GM12878 (cell line): ENCODE measurements at regions of chr16 and their contacts with region 1.

Region 1: GRCh38 chr16:24689145-24689544 is 40.3 kb upstream of the TNRC6A start:
- DNase-seq: no peak
- ATAC-seq: peak; percentile 66
- H3K4me3 ChIP-seq: no peak overlapping the region
- H3K27ac ChIP-seq: no peak overlapping the region
- H3K4me1 ChIP-seq: no peaks in the 10 kb centered on the region
- H3K27me3 ChIP-seq: no peaks in the 10 kb centered on the region
- CTCF ChIP-seq: peak; percentile 42 to 64 (median 57); a peak in 5 of 6 replicates
- EP300 ChIP-seq: no peak
- POLR2A ChIP-seq: no peak
- RAD21 ChIP-seq: peak; percentile 64

Region 2: DNA sequence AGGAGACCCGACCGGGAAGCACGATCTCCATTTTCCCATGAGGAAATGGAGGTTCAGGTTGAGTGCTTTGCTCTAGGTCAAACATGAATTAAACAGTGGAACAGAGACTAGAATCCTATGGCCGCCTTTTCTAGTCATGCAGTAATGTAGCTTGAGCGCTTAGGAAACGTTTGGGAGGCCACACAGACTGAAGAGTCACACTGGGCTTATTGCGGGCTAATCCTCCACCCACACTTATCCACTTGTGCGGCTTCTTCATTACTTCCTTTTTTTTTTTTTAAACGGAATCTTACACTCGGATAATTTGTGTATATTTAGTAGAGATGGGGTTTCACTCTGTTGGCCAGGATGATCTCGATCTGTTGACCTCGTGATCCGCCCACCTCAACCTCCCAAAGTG is 407.0 kb before region 1 on chr16:
- CTCF ChIA-PET with region 1: no interaction called
- POLR2A ChIA-PET with region 1: no interaction called
- RAD21 ChIA-PET with region 1: no interaction called
- SMC1A ChIA-PET with region 1: no interaction called
- in situ Hi-C with region 1: no loop called
- intact Hi-C with region 1: no loop called
- DNase-seq: no peak
- ATAC-seq: no peak
- H3K4me3 ChIP-seq: no peak overlapping the region
- H3K27ac ChIP-seq: no peak overlapping the region
- H3K4me1 ChIP-seq: no peaks in the 10 kb centered on the region
- H3K27me3 ChIP-seq: no peaks in the 10 kb centered on the region
- CTCF ChIP-seq: no peak
- EP300 ChIP-seq: no peak
- POLR2A ChIP-seq: no peak
- RAD21 ChIP-seq: no peak

Region 3: GRCh38 chr16:24516900-24517669 is 172.1 kb before region 1 on chr16:
- CTCF ChIA-PET with region 1: interaction called, 5 read pairs
- POLR2A ChIA-PET with region 1: no interaction called
- RAD21 ChIA-PET with region 1: no interaction called
- SMC1A ChIA-PET with region 1: interaction called, 4 read pairs
- in situ Hi-C with region 1: no loop called
- intact Hi-C with region 1: loop called (anchors 2 kb)
- DNase-seq: peak; percentile 38
- ATAC-seq: peak; percentile 90
- H3K4me3 ChIP-seq: no peak overlapping the region
- H3K27ac ChIP-seq: no peak overlapping the region
- H3K4me1 ChIP-seq: no peaks in the 10 kb centered on the region
- H3K27me3 ChIP-seq: no peaks in the 10 kb centered on the region; a peak in 1 of 4 replicates
- CTCF ChIP-seq: peak; percentile 90 to 92 (median 91)
- EP300 ChIP-seq: no peak
- POLR2A ChIP-seq: no peak
- RAD21 ChIP-seq: peak; percentile 91

Region 4: GRCh38 chr16:24580665-24581064 is 108.5 kb before region 1 on chr16:
- CTCF ChIA-PET with region 1: interaction called, 5 read pairs
- POLR2A ChIA-PET with region 1: no interaction called
- RAD21 ChIA-PET with region 1: no interaction called
- SMC1A ChIA-PET with region 1: no interaction called
- in situ Hi-C with region 1: no loop called
- intact Hi-C with region 1: loop called (anchors 10 kb)
- DNase-seq: no peak
- ATAC-seq: no peak
- H3K4me3 ChIP-seq: no peak overlapping the region
- H3K27ac ChIP-seq: no peak overlapping the region
- H3K4me1 ChIP-seq: no peaks in the 10 kb centered on the region
- H3K27me3 ChIP-seq: no peaks in the 10 kb centered on the region
- CTCF ChIP-seq: peak; percentile 6 to 29 (median 10); a peak in 1 of 6 replicates
- EP300 ChIP-seq: no peak
- POLR2A ChIP-seq: no peak
- RAD21 ChIP-seq: peak; percentile 57

Region 5: GRCh38 chr16:24717411-24717810 is 28.3 kb after region 1 on chr16:
- CTCF ChIA-PET with region 1: no interaction called
- POLR2A ChIA-PET with region 1: no interaction called
- RAD21 ChIA-PET with region 1: no interaction called
- SMC1A ChIA-PET with region 1: no interaction called
- in situ Hi-C with region 1: no loop called
- intact Hi-C with region 1: no loop called
- DNase-seq: no peak
- ATAC-seq: no peak
- H3K4me3 ChIP-seq: no peak overlapping the region
- H3K27ac ChIP-seq: no peak overlapping the region
- H3K4me1 ChIP-seq: no peaks in the 10 kb centered on the region
- H3K27me3 ChIP-seq: no peaks in the 10 kb centered on the region
- CTCF ChIP-seq: no peak
- EP300 ChIP-seq: no peak
- POLR2A ChIP-seq: no peak
- RAD21 ChIP-seq: no peak

Region 6: GRCh38 chr16:24729985-24730815 is 41.1 kb after region 1 on chr16:
- CTCF ChIA-PET with region 1: no interaction called
- POLR2A ChIA-PET with region 1: no interaction called
- RAD21 ChIA-PET with region 1: no interaction called
- SMC1A ChIA-PET with region 1: no interaction called
- in situ Hi-C with region 1: no loop called
- intact Hi-C with region 1: no loop called
- DNase-seq: no peak
- ATAC-seq: no peak
- H3K4me3 ChIP-seq: peak overlapping the region; percentile 97
- H3K27ac ChIP-seq: peak overlapping the region; percentile 76
- H3K4me1 ChIP-seq: peaks cover 28% of the 10 kb centered on the region
- H3K27me3 ChIP-seq: no peaks in the 10 kb centered on the region
- CTCF ChIP-seq: no peak
- EP300 ChIP-seq: no peak
- POLR2A ChIP-seq: no peak
- RAD21 ChIP-seq: no peak